Spleen (tissue), 13 donors: ENCODE measurements at regions of chr6 and their contacts with region 1.

Region 1: DNA sequence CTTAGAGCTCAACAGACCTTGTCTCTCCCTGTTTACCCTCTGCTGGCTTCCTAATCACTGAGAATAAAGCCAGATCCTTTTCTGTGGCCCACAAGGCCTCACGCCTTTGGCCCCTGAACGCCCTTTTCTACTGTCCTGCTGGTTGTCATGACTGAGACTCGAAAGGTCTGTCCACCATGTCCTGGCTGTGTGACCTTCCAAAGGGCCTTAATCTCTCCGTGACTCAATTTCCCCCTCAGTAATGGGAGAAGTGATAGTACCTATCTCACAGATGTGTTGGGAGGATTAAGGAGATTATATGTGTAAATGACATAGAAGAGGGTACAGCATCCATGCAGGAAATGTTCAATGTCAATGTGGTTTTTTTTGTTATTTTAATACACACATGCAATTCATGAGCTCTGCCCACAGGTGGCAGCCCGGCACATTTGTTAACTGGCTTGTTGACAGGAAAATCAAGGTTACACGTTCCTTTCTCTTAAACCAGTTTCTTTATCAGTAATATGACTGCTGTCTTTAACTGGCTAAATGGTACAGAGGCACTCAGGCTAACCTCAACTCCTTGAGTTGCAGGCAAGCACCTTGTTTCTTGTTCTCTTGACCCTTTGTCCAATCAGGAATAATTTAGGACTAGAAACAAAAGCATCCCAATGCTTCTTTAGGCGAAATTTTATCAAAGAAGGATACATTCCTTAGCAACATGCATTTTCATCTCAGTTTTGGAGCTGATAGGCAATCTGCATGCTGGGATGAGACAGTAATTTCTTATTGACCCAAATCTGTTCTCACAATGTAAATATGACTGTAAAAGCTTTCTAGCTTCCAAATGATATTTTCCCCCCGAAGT is 16.6 kb downstream of the SLC22A1 start:
- DNase-seq: no peak
- H3K4me3 ChIP-seq: no peak overlapping the region
- H3K27ac ChIP-seq: no peak overlapping the region
- H3K4me1 ChIP-seq: peaks cover 0 to 7% (median 3%) of the 10 kb centered on the region in 6 donors
- H3K27me3 ChIP-seq: no peaks in the 10 kb centered on the region
- CTCF ChIP-seq: peak; percentile 42 to 77 (median 68)
- POLR2A ChIP-seq: no peak

Region 2: GRCh38 chr6:160265869-160266476 is 127.8 kb after region 1 on chr6:
- intact Hi-C with region 1: no loop called
- DNase-seq: no peak
- H3K4me3 ChIP-seq: no peak overlapping the region
- H3K27ac ChIP-seq: no peak overlapping the region
- H3K4me1 ChIP-seq: no peaks in the 10 kb centered on the region
- H3K27me3 ChIP-seq: peaks cover 0 to 7% (median 0%) of the 10 kb centered on the region in 7 donors
- CTCF ChIP-seq: no peak
- POLR2A ChIP-seq: no peak

Region 3: DNA sequence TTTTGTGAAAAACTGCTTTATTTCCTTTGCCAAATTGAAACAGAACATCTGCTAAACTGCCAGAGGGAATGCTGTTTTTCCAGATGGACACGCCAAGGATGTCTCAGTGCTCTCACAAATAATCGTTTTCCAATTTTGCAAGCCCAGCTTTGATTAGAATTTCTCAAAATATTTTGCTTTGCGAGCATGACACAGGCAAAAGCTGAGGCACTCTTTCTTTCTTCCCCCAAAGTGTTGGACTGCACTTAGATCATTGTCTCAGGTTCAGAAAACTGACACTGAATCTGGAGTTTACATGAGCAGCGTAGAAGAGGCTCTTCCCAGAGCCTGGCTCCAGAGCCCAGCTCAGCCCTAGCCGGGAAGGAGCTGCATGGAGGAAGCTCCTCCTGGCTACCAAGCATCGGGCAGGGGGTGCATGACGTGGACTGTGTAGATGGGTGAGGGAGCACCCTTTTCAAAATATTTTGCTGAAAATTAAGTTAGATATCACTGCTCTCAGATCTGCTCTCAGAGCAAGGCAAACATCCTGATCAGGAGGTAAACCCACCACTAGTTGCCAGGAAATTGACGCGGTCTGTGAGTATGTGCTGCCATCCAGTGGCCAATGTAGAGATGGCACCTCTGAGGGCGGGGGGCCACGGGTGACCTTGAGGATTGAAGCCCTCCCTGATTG is 317.5 kb after region 1 on chr6:
- intact Hi-C with region 1: loop called (anchors 5 kb)
- DNase-seq: peak; percentile 87
- H3K4me3 ChIP-seq: peak overlapping the region in 1 of 8 donors; percentile 31
- H3K27ac ChIP-seq: no peak overlapping the region
- H3K4me1 ChIP-seq: peaks cover 0 to 45% (median 21%) of the 10 kb centered on the region in 6 donors
- H3K27me3 ChIP-seq: peaks cover 0 to 3% (median 0%) of the 10 kb centered on the region in 7 donors
- CTCF ChIP-seq: peak; percentile 92 to 96 (median 94)
- POLR2A ChIP-seq: no peak

Region 4: DNA sequence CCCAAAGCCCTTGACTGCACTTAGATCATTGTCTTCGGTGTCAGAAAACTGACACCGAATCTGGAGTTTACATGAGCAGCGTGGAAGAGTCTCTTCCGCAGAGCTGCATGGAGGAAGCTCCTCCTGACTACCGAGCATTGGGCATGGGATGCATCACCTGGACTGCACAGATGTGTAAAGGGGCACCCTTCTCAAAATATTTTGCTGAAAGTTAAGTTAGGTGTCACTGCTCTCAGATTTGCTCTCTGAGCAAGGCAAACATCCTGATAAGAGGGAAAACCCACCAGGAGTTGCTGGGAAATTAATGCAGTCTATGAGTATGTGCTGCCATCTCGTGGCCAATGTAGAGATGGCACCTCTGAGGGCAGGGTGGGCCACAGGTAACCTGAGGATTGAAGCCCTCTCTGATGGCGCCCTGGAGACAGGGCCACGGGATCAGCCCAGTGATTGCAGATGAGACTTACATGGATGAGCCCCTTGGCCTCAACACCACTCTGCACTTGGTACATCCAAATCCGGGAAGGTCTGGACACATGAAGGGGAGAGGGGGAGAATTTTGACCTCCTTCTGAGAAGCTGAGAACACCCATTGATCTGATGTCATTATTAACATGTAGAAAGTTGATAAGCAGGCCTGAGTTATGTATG is 396.0 kb after region 1 on chr6:
- intact Hi-C with region 1: loop called (anchors 10 kb)
- DNase-seq: peak; percentile 79
- H3K4me3 ChIP-seq: peak overlapping the region in 1 of 8 donors; percentile 42
- H3K27ac ChIP-seq: no peak overlapping the region
- H3K4me1 ChIP-seq: peaks cover 0 to 7% (median 5%) of the 10 kb centered on the region in 6 donors
- H3K27me3 ChIP-seq: peaks cover 0 to 4% (median 0%) of the 10 kb centered on the region in 7 donors
- CTCF ChIP-seq: peak; percentile 79 to 96 (median 93)
- POLR2A ChIP-seq: no peak